ENCODE measurements at regions of chr2 and their contacts with region 1.

Region 1: GRCh38 chr2:179422037-179422643 is 157.5 kb upstream of the SESTD1 start:
- DNase-seq: no peak
- H3K4me3 ChIP-seq: no peak overlapping the region
- H3K27me3 ChIP-seq: no peaks in the 10 kb centered on the region
- CTCF ChIP-seq: peak; percentile 83

Region 2: DNA sequence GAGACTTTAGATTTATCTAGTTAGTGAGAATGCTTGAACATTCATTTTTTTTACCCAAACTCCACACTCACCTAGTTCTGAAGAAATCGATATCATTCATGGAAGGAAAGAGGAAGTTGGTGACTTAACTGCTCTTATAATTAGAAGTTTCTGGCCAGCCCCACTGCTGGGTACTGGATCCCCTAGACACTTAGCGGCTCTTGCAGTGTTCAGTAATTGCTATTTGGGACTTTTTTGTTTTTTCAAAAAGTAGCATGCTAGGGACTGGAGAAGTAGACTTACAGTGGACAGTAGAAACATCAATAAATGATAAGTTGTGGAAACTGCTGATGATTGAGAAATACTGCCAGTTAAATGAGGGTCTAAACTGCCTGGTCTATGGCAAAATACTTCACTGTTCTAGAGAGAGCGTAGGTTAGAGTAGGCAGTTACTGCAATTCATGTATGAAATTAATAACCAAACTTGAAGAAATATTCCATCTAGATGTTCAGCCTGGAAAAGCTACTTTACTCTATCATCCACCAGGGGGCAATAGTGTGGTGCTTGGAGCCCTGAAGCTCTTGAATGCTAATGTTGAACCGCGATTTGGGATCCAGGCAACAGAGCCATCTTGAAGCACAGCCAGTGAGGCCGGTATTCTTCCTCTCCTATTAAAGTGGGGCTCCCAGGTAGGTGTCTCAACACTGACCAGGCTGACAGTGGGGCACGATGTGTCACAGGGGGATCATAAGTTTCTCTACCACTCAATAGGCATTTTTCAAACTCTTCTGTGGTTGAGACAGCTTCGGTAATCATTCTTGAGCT is 11.4 kb before region 1 on chr2:
- CTCF ChIA-PET with region 1: interaction called, 33 read pairs
- POLR2A ChIA-PET with region 1: no interaction called
- DNase-seq: no peak
- H3K4me3 ChIP-seq: no peak overlapping the region
- H3K27me3 ChIP-seq: no peaks in the 10 kb centered on the region
- CTCF ChIP-seq: peak; percentile 79

Region 3: DNA sequence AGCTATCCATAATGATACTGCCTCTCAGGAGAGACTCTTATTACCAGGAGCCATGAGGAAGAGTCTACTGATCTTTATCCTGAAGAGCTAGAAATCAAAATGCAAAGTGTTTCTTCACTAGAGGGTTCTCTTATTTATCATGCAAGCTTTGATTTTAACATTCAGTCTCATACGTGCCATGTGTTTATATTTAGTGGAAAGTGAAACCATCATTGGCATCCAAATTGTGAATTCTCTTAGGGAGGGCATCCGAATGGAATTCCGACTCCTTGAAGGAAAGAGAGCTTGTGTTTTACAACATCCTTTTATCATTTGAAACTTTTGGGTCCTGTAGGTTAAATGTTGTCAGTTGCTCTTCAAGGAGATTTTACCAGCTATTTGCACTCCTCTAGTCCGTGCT is 12.9 kb after region 1 on chr2:
- CTCF ChIA-PET with region 1: interaction called, 19 read pairs
- POLR2A ChIA-PET with region 1: no interaction called
- DNase-seq: no peak
- H3K4me3 ChIP-seq: no peak overlapping the region
- H3K27me3 ChIP-seq: no peaks in the 10 kb centered on the region
- CTCF ChIP-seq: no peak

Region 4: DNA sequence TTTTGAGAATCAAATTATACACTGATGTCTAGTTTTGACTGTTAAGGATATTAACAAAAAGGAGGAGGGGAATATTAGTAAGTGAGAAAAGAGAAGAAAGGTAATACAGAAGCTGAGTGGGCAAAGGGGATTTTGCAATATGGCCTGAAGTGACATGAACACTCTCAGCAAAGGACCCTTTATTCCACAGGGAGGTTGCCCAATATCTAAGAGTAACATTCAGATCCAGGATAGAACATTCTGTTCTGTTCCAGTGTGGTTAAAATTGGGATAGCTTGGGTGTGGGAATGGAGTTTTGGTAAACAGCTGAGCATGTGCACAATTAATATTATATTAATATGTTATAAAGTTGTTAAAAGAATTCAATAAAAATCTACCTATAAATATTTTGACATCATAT is 319.2 kb after region 1 on chr2:
- CTCF ChIA-PET with region 1: interaction called, 10 read pairs
- POLR2A ChIA-PET with region 1: no interaction called
- DNase-seq: no peak
- H3K4me3 ChIP-seq: no peak overlapping the region
- H3K27me3 ChIP-seq: no peaks in the 10 kb centered on the region
- CTCF ChIP-seq: no peak

Region 5: GRCh38 chr2:179751163-179751809 is 329.1 kb after region 1 on chr2:
- CTCF ChIA-PET with region 1: interaction called, 16 read pairs
- POLR2A ChIA-PET with region 1: no interaction called
- DNase-seq: no peak
- H3K4me3 ChIP-seq: no peak overlapping the region
- H3K27me3 ChIP-seq: no peaks in the 10 kb centered on the region
- CTCF ChIP-seq: peak; percentile 52

Measured in BJ (cell line).